ENCODE measurements at regions of chr12 and their contacts with region 1.

Region 1: DNA sequence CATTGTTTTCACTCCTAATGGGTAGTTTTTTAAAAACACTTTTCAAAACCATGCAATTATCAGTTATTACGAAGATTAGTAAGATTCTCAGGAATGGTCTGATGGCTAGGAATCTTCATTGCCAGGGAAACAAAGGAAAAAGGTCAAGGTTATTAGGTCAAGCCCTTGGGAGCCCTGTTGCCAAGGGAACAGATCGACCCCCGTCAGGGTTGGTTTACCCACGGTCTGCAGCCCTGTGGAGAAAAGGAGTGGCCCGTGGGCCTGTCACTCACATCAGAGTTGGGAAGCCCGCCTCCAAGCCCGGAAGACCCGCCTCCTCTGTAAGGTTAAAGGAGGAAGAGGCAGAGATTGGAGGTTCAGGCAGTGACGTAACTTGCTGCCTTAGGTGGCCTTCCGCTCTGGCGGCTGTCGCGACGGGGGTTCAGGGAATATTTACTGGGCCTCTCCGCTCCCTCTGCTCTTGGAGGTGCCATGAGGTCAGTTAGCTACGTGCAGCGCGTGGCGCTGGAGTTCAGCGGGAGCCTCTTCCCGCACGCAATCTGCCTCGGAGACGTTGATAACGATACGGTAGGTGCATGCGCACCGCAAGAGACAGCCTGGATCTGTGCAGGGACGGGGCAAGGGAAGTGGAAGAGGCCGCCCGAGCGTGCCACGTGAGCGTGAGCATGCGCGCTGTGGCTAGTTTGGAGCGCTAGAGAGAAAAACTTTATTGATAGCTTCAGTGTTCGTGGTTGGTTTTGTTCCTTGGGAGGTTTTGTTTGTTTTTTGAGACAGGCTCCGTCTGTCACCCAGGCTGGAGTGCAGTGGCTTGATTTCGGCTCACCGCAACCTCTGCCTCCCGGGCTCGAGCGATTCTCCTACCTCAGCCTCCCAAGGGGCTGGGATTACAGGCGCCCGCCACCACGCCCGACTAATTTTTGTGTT is at the start of gene ITFG2:
- DNase-seq: peak; percentile 96 to 98
- H3K4me3 ChIP-seq: peak within 1 kb of the TSS; percentile 78
- H3K27ac ChIP-seq: peak within 1 kb of the TSS; percentile 76
- H3K4me1 ChIP-seq: peaks cover 16% of the 10 kb centered on the region
- H3K27me3 ChIP-seq: no peaks in the 10 kb centered on the region
- CTCF ChIP-seq: no peak
- total RNA-seq, gene ITFG2: 33.3 and 41.3 TPM in 2 replicates

Region 2: GRCh38 chr12:2794736-2795289 is 17.7 kb before region 1 on chr12 and contains the start of gene FKBP4:
- CTCF ChIA-PET with region 1: interaction called, 3 read pairs
- POLR2A ChIA-PET with region 1: interaction called, 10 read pairs
- intact Hi-C with region 1: loop called (anchors 1 kb)
- DNase-seq: peak; percentile 62 to 91
- H3K4me3 ChIP-seq: peak within 1 kb of the TSS; percentile 60
- H3K27ac ChIP-seq: no peak within 1 kb of the TSS
- H3K4me1 ChIP-seq: peaks cover 8% of the 10 kb centered on the region
- H3K27me3 ChIP-seq: peaks cover 6% of the 10 kb centered on the region; the same call in 1 of the 2 replicates
- CTCF ChIP-seq: no peak
- total RNA-seq, gene FKBP4: 189 and 226 TPM in 2 replicates

Region 3: GRCh38 chr12:2884810-2885209 is 72.3 kb after region 1 on chr12:
- CTCF ChIA-PET with region 1: interaction called, 11 read pairs
- POLR2A ChIA-PET with region 1: interaction called, 3 read pairs
- intact Hi-C with region 1: no loop called
- DNase-seq: no peak
- H3K4me3 ChIP-seq: no peak overlapping the region
- H3K27ac ChIP-seq: no peak overlapping the region
- H3K4me1 ChIP-seq: no peaks in the 10 kb centered on the region
- H3K27me3 ChIP-seq: no peaks in the 10 kb centered on the region
- CTCF ChIP-seq: no peak

Region 4: DNA sequence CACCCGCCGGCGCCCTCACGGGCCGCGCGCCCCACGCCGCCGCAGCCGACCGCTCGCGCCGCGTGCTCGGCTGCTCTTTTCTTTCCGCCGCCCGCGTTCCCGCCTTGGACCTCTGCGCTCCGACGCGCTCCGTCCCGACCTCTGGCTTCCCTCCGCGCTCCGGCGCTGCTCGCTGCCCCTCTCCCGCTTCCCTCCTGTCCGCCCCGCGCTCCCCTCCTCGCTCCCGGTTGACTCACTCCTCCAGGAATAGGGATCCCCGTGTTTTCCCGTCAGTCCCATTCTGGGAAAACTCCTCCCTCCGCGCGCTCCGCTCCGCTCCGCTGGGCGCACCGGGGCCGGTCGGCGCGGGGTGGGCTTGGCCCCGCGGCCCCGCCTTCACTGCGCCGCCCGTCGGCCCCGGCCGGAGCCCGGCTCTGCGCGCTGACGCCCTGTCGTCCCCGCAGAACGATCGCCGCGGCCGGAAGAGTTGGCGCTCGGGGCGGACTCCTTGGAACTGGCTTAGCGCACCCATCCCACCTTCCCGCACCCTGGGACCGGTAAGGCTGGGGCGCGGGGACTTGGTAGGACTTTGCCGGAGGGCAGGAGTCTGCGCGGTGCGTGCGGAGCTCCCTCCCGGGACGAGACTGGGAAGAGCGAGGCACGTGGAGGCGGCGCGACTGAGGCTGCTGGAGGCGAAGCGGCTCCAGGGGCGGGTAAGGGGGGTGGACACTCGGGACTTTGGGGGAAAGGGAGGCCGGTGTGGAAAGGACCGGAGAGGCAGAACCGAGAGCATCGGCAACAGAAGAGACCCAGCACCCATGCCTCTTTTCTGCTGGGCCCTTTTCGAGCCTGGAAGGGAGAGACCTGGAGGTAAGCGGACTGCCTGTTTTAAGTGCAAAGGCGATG is 147.2 kb after region 1 on chr12:
- CTCF ChIA-PET with region 1: no interaction called
- POLR2A ChIA-PET with region 1: no interaction called
- intact Hi-C with region 1: loop called (anchors 1 kb)
- DNase-seq: peak; percentile 41 to 67
- H3K4me3 ChIP-seq: peak overlapping the region; percentile 83
- H3K27ac ChIP-seq: peak overlapping the region; percentile 53
- H3K4me1 ChIP-seq: peaks cover 33% of the 10 kb centered on the region
- H3K27me3 ChIP-seq: no peaks in the 10 kb centered on the region
- CTCF ChIP-seq: no peak